ENCODE measurements at regions of chr10 and their contacts with region 1.

Region 1: GRCh38 chr10:12710594-12711349 is 290.7 kb downstream of the CCDC3 start:
- DNase-seq: peak; percentile 74
- H3K4me3 Mint-ChIP-seq: no peak overlapping the region
- H3K27ac Mint-ChIP-seq: peak overlapping the region; percentile 76
- H3K4me1 Mint-ChIP-seq: peaks cover 65% of the 10 kb centered on the region
- H3K27me3 Mint-ChIP-seq: no peaks in the 10 kb centered on the region

Region 2: GRCh38 chr10:11715815-11716494 is 994.8 kb before region 1 on chr10:
- intact Hi-C with region 1: no loop called
- DNase-seq: no peak
- H3K4me3 Mint-ChIP-seq: no peak overlapping the region
- H3K27ac Mint-ChIP-seq: no peak overlapping the region
- H3K4me1 Mint-ChIP-seq: peaks cover under 1% of the 10 kb centered on the region
- H3K27me3 Mint-ChIP-seq: peaks cover 71% of the 10 kb centered on the region

Region 3: DNA sequence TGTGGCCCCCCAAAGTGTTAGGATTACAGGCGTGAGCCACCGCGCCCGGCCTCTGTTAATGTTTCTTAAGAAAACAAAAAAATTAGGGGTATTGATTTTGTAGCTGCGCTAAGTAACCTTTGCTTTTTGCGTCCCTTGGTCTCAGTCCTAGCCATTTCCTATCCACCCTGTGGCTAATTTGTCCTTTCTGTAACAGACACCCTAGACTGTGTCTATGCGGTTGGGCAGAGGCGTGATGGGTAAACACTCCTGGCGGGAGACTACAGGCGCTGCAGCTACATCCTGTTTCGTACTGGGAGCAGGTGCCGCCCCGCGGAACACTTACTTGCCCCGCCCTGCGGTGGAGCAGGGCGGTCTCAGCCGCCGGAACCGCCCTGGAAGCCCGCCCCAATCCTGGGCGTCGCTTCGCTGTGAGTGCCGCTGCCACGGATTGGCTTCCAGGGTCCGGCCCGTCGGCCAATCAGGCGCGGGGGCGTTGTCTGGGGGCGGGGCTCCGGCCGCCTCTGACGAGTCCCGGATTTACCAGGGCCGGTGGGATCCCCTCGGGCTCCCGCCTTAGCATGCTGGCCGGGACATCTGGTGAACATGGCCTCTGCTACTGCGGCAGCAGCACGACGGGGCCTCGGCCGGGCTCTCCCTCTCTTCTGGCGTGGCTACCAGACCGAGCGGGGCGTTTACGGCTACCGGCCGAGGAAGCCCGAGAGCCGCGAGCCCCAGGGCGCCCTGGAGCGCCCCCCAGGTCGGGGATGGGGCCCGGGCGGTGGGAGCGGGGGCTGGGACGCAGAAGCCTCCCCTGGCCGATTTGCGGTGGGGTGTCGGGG is 642.1 kb before region 1 on chr10 and contains the start of gene DHTKD1:
- intact Hi-C with region 1: loop called (anchors 10 kb)
- DNase-seq: peak; percentile 100
- H3K4me3 Mint-ChIP-seq: peak within 1 kb of the TSS; percentile 83
- H3K27ac Mint-ChIP-seq: peak within 1 kb of the TSS; percentile 83
- H3K4me1 Mint-ChIP-seq: peaks cover 27% of the 10 kb centered on the region
- H3K27me3 Mint-ChIP-seq: no peaks in the 10 kb centered on the region
- total RNA-seq, gene DHTKD1: 19.9 and 22.6 TPM in 2 replicates

Region 4: GRCh38 chr10:12214763-12215218 is 496.0 kb before region 1 on chr10:
- intact Hi-C with region 1: loop called (anchors 1 kb)
- DNase-seq: peak; percentile 15
- H3K4me3 Mint-ChIP-seq: peak overlapping the region; percentile 43
- H3K27ac Mint-ChIP-seq: peak overlapping the region; percentile 59
- H3K4me1 Mint-ChIP-seq: peaks cover 37% of the 10 kb centered on the region
- H3K27me3 Mint-ChIP-seq: no peaks in the 10 kb centered on the region

Region 5: GRCh38 chr10:12264204-12264940 is 446.4 kb before region 1 on chr10:
- intact Hi-C with region 1: loop called (anchors 1 kb)
- DNase-seq: peak; percentile 63
- H3K4me3 Mint-ChIP-seq: peak overlapping the region; percentile 82
- H3K27ac Mint-ChIP-seq: peak overlapping the region; percentile 98
- H3K4me1 Mint-ChIP-seq: peaks cover 23% of the 10 kb centered on the region
- H3K27me3 Mint-ChIP-seq: peaks cover 1% of the 10 kb centered on the region

Region 6: GRCh38 chr10:12448729-12449391 is 261.9 kb before region 1 on chr10:
- intact Hi-C with region 1: loop called (anchors 1 kb)
- DNase-seq: peak; percentile 81
- H3K4me3 Mint-ChIP-seq: peak overlapping the region; percentile 64
- H3K27ac Mint-ChIP-seq: peak overlapping the region; percentile 72
- H3K4me1 Mint-ChIP-seq: peaks cover 31% of the 10 kb centered on the region
- H3K27me3 Mint-ChIP-seq: peaks cover 16% of the 10 kb centered on the region

Region 7: DNA sequence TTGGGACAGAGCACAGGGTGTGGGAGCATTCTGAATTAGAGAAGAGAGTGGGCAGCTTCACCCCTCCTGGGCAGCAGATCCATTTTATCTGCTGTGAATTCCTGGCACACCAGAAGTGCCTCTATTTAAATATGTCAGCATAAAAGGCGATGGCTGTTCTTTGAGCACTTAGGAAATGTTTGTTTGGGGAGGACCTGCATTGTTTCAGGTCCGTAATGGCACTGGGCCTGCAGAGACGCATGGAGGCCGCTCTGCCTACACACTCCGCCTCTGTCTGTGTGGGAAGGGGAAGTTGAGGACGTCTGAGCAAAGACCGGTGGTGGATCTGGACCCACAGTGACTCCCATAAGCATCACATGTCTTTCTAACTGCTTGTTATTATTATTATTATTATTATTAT is 108.3 kb before region 1 on chr10:
- intact Hi-C with region 1: no loop called
- DNase-seq: no peak
- H3K4me3 Mint-ChIP-seq: no peak overlapping the region
- H3K27ac Mint-ChIP-seq: no peak overlapping the region
- H3K4me1 Mint-ChIP-seq: peaks cover 63% of the 10 kb centered on the region
- H3K27me3 Mint-ChIP-seq: no peaks in the 10 kb centered on the region

Region 8: DNA sequence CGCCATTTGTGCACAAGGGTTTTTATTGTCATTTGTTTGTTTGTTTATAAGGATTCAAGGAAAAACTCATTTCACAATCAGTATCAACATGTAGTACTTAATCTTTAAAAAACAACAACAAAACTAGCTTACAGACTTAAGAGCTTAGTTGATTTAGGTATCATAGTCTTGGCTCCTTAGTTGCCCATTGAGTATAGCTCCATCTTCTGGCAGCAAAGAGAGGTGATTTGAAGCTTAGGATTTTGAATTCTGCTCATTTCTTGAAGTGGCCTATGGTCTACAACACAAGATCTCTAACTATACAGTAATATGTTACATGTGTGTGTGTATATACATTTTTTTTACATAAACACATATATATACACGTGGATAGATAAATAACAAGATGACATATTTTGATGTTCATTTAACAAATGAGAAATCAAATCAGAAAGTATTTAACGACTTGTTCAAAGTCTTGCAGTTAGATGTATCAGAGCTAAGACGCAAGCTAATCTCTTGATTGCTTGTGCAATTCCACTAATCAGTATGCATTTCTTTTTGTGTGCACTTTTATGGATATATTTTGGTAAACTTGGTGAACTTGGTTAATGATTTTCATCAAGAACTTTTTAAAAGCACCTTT is 54.1 kb before region 1 on chr10:
- intact Hi-C with region 1: loop called (anchors 2 kb)
- DNase-seq: peak; percentile 6
- H3K4me3 Mint-ChIP-seq: no peak overlapping the region
- H3K27ac Mint-ChIP-seq: peak overlapping the region; percentile 34
- H3K4me1 Mint-ChIP-seq: peaks cover 34% of the 10 kb centered on the region
- H3K27me3 Mint-ChIP-seq: no peaks in the 10 kb centered on the region

Region 9: DNA sequence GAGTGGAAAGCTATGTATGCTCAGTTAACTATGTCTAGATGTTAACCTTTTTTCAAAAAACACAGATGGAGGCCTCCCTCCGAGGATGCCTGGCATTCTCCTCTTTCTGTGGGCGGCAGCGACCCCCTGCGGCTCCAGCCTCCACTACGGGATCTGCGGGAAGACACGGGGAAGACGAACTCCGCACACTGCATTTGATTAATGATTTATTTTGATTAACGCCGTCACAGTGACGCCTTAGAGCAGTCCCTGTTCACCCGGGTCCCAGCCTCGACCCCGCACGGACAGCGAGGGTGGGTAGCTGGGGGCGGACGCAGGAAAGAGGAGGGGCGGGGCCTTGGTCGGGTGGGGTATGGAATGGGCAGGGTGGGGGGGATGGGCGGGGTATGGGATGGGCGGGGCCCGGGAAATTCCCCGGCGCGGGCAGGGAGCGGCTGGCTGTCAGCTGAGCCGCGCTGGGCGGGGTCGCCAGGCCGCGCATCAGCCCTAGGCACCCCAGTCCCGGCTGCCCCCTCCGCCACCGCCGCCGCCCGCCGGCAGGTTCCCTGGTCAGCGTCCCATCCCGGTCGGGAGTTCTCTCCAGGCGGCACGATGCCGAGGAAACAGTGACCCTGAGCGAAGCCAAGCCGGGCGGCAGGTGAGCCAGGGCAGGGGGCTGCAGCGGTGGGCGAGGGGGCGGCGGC is 389.0 kb after region 1 on chr10 and contains the start of gene OPTN:
- intact Hi-C with region 1: loop called (anchors 2 kb)
- DNase-seq: peak; percentile 73
- H3K4me3 Mint-ChIP-seq: peak within 1 kb of the TSS; percentile 93
- H3K27ac Mint-ChIP-seq: peak within 1 kb of the TSS; percentile 92
- H3K4me1 Mint-ChIP-seq: peaks cover 55% of the 10 kb centered on the region
- H3K27me3 Mint-ChIP-seq: no peaks in the 10 kb centered on the region
- total RNA-seq, gene OPTN: 52.6 and 54.1 TPM in 2 replicates